ENCODE measurements at regions of chr9 and their contacts with region 1.

Region 1: GRCh38 chr9:20558566-20559016 is 63.7 kb downstream of the MLLT3 start:
- DNase-seq: peak; percentile 61
- ATAC-seq: peak; percentile 92
- H3K4me3 Mint-ChIP-seq: no peak overlapping the region
- H3K27ac Mint-ChIP-seq: peak overlapping the region; percentile 86
- H3K4me1 Mint-ChIP-seq: peaks cover 85% of the 10 kb centered on the region
- H3K27me3 Mint-ChIP-seq: no peaks in the 10 kb centered on the region

Region 2: GRCh38 chr9:19517202-19517942 is 1041.2 kb before region 1 on chr9:
- CTCF ChIA-PET with region 1: no interaction called
- POLR2A ChIA-PET with region 1: no interaction called
- intact Hi-C with region 1: loop called in 1 of 2 experiments (anchors 5 kb)
- DNase-seq: peak; percentile 31
- ATAC-seq: peak; percentile 51
- H3K4me3 Mint-ChIP-seq: no peak overlapping the region
- H3K27ac Mint-ChIP-seq: no peak overlapping the region
- H3K4me1 Mint-ChIP-seq: peaks cover 23% of the 10 kb centered on the region
- H3K27me3 Mint-ChIP-seq: peaks cover 8% of the 10 kb centered on the region

Region 3: DNA sequence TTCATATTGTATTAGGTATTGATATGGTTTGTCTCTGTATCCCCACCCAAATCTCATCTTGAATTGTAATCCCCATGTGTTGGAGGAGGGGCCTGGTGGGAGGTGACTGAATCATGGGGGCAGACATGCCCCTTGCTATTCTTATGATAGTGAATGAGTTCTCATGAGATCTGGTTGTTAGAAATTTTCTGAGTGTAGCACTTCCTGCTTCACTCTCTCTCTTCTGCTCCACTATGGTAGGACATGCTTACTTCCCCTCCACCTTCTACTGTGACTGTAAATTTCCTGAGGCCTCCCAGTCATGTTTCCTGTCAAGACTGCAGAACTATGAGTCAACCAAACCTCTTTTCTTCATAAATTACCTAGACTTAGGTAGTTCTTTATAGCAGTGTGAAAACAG is 582.4 kb before region 1 on chr9:
- CTCF ChIA-PET with region 1: no interaction called
- POLR2A ChIA-PET with region 1: no interaction called
- intact Hi-C with region 1: loop called in 1 of 2 experiments (anchors 2 kb)
- DNase-seq: peak; percentile 49
- ATAC-seq: peak; percentile 96
- H3K4me3 Mint-ChIP-seq: no peak overlapping the region
- H3K27ac Mint-ChIP-seq: peak overlapping the region; percentile 88
- H3K4me1 Mint-ChIP-seq: peaks cover 25% of the 10 kb centered on the region
- H3K27me3 Mint-ChIP-seq: peaks cover 2% of the 10 kb centered on the region

Region 4: DNA sequence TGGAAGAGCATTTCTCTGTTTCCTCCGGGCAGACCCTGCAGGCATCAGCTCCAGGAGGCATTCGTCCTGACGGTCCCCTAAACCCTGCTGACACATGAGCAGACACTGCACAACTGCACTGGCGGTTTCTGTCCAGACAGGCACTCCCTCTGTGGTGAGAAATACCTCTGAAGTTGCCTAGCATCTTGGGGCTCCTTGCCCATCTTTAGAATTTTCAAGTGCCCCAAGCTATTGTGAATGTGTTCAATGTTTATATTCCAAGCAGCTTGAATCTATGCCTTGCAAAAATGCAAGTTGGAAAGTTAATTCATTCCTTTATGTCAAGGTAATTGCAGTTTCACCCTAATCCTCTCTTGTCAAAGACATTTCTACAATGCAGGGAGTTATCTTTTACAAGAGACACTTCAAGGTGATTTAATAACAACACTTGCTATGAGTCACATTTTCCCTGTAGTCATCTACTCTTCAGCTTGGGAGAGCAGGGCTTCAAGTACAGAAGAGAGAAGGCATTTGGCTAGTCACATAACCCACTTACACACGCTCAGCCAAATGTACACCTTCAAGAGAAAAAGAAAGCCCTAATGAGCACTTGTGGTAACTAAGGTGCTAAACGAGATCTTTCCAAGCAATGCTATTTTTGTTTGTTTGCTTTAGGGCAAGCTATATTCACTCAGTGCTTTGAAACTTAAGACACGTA is 238.8 kb before region 1 on chr9:
- CTCF ChIA-PET with region 1: no interaction called
- POLR2A ChIA-PET with region 1: no interaction called
- intact Hi-C with region 1: loop called in 1 of 2 experiments (anchors 5 kb)
- DNase-seq: peak; percentile 52
- ATAC-seq: peak; percentile 74
- H3K4me3 Mint-ChIP-seq: no peak overlapping the region
- H3K27ac Mint-ChIP-seq: peak overlapping the region; percentile 29
- H3K4me1 Mint-ChIP-seq: peaks cover 90% of the 10 kb centered on the region
- H3K27me3 Mint-ChIP-seq: no peaks in the 10 kb centered on the region

Region 5: GRCh38 chr9:20684035-20684872 is 125.7 kb after region 1 on chr9 and contains the start of gene FOCAD:
- CTCF ChIA-PET with region 1: no interaction called
- POLR2A ChIA-PET with region 1: interaction called, 3 read pairs
- intact Hi-C with region 1: loop called in 1 of 2 experiments (anchors 2 kb)
- DNase-seq: peak; percentile 97
- ATAC-seq: peak; percentile 98
- H3K4me3 Mint-ChIP-seq: peak within 1 kb of the TSS; percentile 86
- H3K27ac Mint-ChIP-seq: peak within 1 kb of the TSS; percentile 75
- H3K4me1 Mint-ChIP-seq: peaks cover 27% of the 10 kb centered on the region
- H3K27me3 Mint-ChIP-seq: no peaks in the 10 kb centered on the region
- total RNA-seq, gene FOCAD: 32.5 to 34.3 TPM

Region 6: GRCh38 chr9:21096172-21096900 is 537.7 kb after region 1 on chr9:
- CTCF ChIA-PET with region 1: no interaction called
- POLR2A ChIA-PET with region 1: no interaction called
- intact Hi-C with region 1: loop called in 1 of 2 experiments (anchors 5 kb)
- DNase-seq: peak; percentile 64
- ATAC-seq: peak; percentile 95
- H3K4me3 Mint-ChIP-seq: peak overlapping the region; percentile 58
- H3K27ac Mint-ChIP-seq: peak overlapping the region; percentile 87
- H3K4me1 Mint-ChIP-seq: peaks cover 31% of the 10 kb centered on the region
- H3K27me3 Mint-ChIP-seq: no peaks in the 10 kb centered on the region

Measured in activated CD4-positive, alpha-beta T cell treated with anti-CD3 and anti-CD28 coated beads for 36 hours (primary cell).